IMR-90 (cell line): ENCODE measurements at regions of chr5 and their contacts with region 1.

Region 1: DNA sequence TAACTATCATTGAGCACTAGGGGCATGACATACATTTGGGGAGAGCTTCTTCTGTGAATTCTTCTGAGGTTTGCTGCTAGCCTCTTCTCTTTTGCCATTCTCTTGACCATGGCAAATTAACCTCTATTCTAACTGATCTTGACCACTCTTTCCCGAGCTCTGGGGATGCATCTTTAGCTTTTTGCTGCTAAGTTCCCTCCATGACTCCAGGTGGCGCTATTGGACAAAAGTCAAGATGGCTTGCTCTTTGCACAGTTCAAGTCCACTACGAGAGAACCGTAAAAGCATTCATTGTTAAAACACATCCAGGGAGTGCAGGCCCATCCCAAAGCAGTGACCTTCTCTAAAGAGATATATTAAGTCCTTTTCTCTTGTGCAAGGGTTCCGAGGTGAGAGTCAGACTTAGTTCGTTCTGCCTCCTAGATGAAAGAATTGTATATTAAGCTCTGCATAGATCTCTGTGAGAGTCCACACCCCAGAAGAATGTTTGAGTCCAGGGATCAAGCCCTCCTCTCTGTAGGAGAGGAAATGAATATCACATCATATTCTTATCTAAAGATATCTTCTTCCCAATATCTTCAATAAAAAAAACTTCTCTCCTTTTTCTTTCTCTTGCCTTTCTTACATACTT is 1152.9 kb upstream of the CDH6 start:
- DNase-seq: peak; percentile 31
- ATAC-seq: no peak
- H3K4me3 ChIP-seq: no peak overlapping the region
- H3K27ac ChIP-seq: no peak overlapping the region
- H3K4me1 ChIP-seq: no peaks in the 10 kb centered on the region
- H3K27me3 ChIP-seq: no peaks in the 10 kb centered on the region
- CTCF ChIP-seq: peak; percentile 59
- POLR2A ChIP-seq: no peak
- RAD21 ChIP-seq: peak; percentile 68

Region 2: DNA sequence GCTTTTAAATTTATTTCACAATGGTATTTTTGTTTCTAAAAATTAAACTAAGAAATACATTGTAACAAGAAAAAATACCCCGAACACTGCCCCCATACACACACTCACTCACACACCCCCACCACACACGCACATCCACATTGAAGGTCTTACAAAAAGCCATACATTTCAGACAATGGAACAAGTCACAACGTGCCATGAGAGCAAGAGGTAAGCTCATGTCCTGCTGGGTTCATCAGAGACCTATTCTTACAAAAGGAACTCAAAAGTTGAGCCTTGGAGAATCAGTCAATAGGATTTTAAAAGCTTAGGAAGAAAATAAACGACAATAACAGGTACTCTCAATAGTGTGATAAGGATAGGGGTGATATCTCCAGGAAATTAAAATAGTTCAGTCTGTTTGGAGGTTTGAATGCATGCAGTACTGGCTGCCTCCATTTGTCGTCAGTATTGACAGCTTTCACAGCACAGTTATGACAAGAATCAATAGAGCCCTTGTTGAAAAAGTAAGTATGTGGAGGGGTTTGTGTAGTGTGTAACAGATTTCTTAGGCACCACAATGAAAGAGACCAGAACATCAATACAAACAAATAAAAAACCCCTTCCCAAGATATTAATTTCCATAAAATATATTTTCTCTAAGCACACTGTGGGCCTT is 673.3 kb before region 1 on chr5:
- CTCF ChIA-PET with region 1: no interaction called
- POLR2A ChIA-PET with region 1: no interaction called
- dilution Hi-C with region 1: no loop called
- in situ Hi-C with region 1: no loop called
- intact Hi-C with region 1: no loop called
- DNase-seq: no peak
- ATAC-seq: no peak
- H3K4me3 ChIP-seq: no peak overlapping the region
- H3K27ac ChIP-seq: no peak overlapping the region
- H3K4me1 ChIP-seq: no peaks in the 10 kb centered on the region
- H3K27me3 ChIP-seq: no peaks in the 10 kb centered on the region
- CTCF ChIP-seq: no peak
- POLR2A ChIP-seq: no peak
- RAD21 ChIP-seq: no peak

Region 3: GRCh38 chr5:31270396-31270795 is 1229.8 kb after region 1 on chr5:
- CTCF ChIA-PET with region 1: interaction called, 3 read pairs
- POLR2A ChIA-PET with region 1: no interaction called
- dilution Hi-C with region 1: no loop called
- in situ Hi-C with region 1: loop called (anchors 25 kb)
- intact Hi-C with region 1: no loop called
- DNase-seq: peak; percentile 22
- ATAC-seq: peak; percentile 14; the same call in 1 of the 2 replicates
- H3K4me3 ChIP-seq: no peak overlapping the region
- H3K27ac ChIP-seq: no peak overlapping the region
- H3K4me1 ChIP-seq: peaks cover 4% of the 10 kb centered on the region
- H3K27me3 ChIP-seq: no peaks in the 10 kb centered on the region
- CTCF ChIP-seq: peak; percentile 44
- POLR2A ChIP-seq: no peak
- RAD21 ChIP-seq: peak; percentile 59